Cardiac septum (tissue), 1 donor: ENCODE measurements at regions of chr18 and their contacts with region 1.

Region 1: GRCh38 chr18:51668101-51668500 is 470.6 kb upstream of the MEX3C start:
- DNase-seq: no peak

Region 2: GRCh38 chr18:52288403-52289004 is 620.4 kb after region 1 on chr18:
- intact Hi-C with region 1: loop called (anchors 10 kb)
- DNase-seq: no peak

Region 3: GRCh38 chr18:52465391-52465790 is 797.3 kb after region 1 on chr18:
- intact Hi-C with region 1: no loop called
- DNase-seq: no peak